AG04450 (cell line): ENCODE measurements at regions of chr14 and their contacts with region 1.

Region 1: DNA sequence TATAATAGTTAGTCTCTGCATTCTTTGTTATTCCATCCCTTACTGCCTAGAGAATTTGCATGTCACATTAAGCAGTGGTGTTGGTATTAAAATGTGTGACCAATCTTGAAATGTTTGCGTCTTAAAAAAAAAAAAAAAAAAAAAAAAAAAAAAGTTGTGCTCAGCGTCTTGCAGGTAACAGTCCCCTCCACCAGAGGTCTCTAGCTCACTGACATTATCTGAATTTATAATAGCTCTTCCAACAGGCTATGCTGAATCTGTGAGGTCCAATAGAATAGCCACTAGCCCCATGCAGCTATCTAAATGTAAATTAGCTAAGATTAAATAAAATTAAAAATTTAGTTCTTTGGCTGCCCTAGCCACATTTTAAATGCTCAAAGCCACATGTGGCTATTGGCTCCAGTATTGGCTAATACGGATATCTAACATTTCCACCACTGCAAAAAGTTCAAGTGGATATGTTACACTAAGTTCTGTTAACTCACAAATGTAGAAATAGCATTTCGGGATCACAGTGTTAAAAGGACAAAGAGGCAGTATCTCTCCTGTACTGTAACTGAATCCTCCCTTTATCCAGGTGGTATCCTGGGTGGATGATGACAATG is 28.7 kb downstream of the NKX2-8 start:
- DNase-seq: peak; percentile 6
- H3K4me3 ChIP-seq: no peak overlapping the region
- H3K27ac ChIP-seq: no peak overlapping the region
- H3K27me3 ChIP-seq: peaks cover 7% of the 10 kb centered on the region
- CTCF ChIP-seq: peak; percentile 81

Region 2: GRCh38 chr14:35883677-35884293 is 670.0 kb before region 1 on chr14:
- CTCF ChIA-PET with region 1: interaction called, 12 read pairs
- POLR2A ChIA-PET with region 1: no interaction called
- DNase-seq: no peak
- H3K4me3 ChIP-seq: no peak overlapping the region
- H3K27ac ChIP-seq: no peak overlapping the region
- H3K27me3 ChIP-seq: no peaks in the 10 kb centered on the region
- CTCF ChIP-seq: peak; percentile 72

Region 3: GRCh38 chr14:36465178-36465577 is 88.6 kb before region 1 on chr14:
- CTCF ChIA-PET with region 1: no interaction called
- POLR2A ChIA-PET with region 1: no interaction called
- DNase-seq: no peak
- H3K4me3 ChIP-seq: no peak overlapping the region
- H3K27ac ChIP-seq: no peak overlapping the region
- H3K27me3 ChIP-seq: no peaks in the 10 kb centered on the region
- CTCF ChIP-seq: no peak

Region 4: DNA sequence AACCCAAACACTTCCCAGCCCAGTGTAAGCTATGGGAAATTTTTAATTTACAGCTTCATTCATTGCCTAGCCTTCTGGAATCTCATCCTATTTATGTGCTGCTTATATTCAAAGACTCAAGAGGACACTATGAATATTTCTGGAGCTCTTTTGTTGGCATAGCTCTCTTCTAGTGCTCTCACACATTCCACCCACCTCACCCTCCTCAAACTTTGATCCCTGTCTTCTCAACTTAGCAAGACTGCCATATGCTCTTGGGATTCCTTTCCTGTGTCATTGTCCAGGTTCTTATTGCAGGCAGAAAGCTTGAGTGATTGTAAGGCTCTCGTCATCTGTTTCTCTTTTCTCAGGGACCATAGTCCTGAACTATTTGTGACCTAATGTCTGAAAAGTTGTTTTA is 15.7 kb before region 1 on chr14:
- CTCF ChIA-PET with region 1: interaction called, 11 read pairs
- POLR2A ChIA-PET with region 1: no interaction called
- DNase-seq: no peak
- H3K4me3 ChIP-seq: no peak overlapping the region
- H3K27ac ChIP-seq: no peak overlapping the region
- H3K27me3 ChIP-seq: no peaks in the 10 kb centered on the region
- CTCF ChIP-seq: no peak

Region 5: DNA sequence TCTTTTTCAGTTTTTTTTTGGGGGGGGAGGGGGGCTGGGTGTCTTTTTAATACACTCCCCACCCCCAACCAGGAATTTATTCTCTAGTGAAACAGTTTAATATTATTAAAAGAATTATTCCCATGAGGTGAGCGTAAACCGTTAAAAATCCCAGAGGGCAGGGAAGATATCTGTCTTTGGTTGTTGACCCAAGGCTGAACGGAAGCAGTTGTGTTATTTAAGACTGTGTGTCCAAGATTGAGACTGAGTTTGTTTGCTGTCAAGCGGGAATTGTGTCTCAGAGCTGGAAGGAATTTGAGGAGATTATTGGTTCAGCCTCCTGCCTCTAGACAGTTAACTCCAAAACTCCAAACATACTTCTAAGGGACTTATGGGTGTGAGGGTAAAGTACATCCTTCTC is 44.0 kb after region 1 on chr14:
- CTCF ChIA-PET with region 1: interaction called, 13 read pairs
- POLR2A ChIA-PET with region 1: no interaction called
- DNase-seq: no peak
- H3K4me3 ChIP-seq: no peak overlapping the region
- H3K27ac ChIP-seq: no peak overlapping the region
- H3K27me3 ChIP-seq: peaks cover 2% of the 10 kb centered on the region
- CTCF ChIP-seq: no peak

Region 6: GRCh38 chr14:36852981-36853691 is 299.4 kb after region 1 on chr14:
- CTCF ChIA-PET with region 1: interaction called, 12 read pairs
- POLR2A ChIA-PET with region 1: no interaction called
- DNase-seq: no peak
- H3K4me3 ChIP-seq: no peak overlapping the region
- H3K27ac ChIP-seq: no peak overlapping the region
- H3K27me3 ChIP-seq: no peaks in the 10 kb centered on the region
- CTCF ChIP-seq: no peak

Region 7: GRCh38 chr14:37116933-37117849 is 563.4 kb after region 1 on chr14:
- CTCF ChIA-PET with region 1: interaction called, 31 read pairs
- POLR2A ChIA-PET with region 1: no interaction called
- DNase-seq: peak; percentile 8
- H3K4me3 ChIP-seq: no peak overlapping the region
- H3K27ac ChIP-seq: no peak overlapping the region
- H3K27me3 ChIP-seq: no peaks in the 10 kb centered on the region
- CTCF ChIP-seq: peak; percentile 70

Region 8: GRCh38 chr14:37150414-37150813 is 596.7 kb after region 1 on chr14:
- CTCF ChIA-PET with region 1: interaction called, 184 read pairs
- POLR2A ChIA-PET with region 1: no interaction called
- DNase-seq: peak; percentile 13
- H3K4me3 ChIP-seq: no peak overlapping the region
- H3K27ac ChIP-seq: no peak overlapping the region
- H3K27me3 ChIP-seq: no peaks in the 10 kb centered on the region
- CTCF ChIP-seq: peak; percentile 76